Lower leg skin (tissue), 4 donors: ENCODE measurements at regions of chr20 and their contacts with region 1.

Region 1: GRCh38 chr20:38645980-38646858 is 44.6 kb downstream of the ARHGAP40 start:
- DNase-seq: peak; percentile 40 to 94
- H3K4me3 ChIP-seq: no peak overlapping the region
- CTCF ChIP-seq: no peak
- POLR2A ChIP-seq: no peak

Region 2: GRCh38 chr20:38748097-38748860 is 102.1 kb after region 1 on chr20 and contains the start of gene ACTR5:
- intact Hi-C with region 1: loop called (anchors 5 kb)
- DNase-seq: peak; percentile 88 to 99
- H3K4me3 ChIP-seq: peak within 1 kb of the TSS; percentile 85
- CTCF ChIP-seq: no peak
- POLR2A ChIP-seq: no peak
- total RNA-seq, gene ACTR5: 7.3 to 11.7 (median 10.8) TPM

Region 3: DNA sequence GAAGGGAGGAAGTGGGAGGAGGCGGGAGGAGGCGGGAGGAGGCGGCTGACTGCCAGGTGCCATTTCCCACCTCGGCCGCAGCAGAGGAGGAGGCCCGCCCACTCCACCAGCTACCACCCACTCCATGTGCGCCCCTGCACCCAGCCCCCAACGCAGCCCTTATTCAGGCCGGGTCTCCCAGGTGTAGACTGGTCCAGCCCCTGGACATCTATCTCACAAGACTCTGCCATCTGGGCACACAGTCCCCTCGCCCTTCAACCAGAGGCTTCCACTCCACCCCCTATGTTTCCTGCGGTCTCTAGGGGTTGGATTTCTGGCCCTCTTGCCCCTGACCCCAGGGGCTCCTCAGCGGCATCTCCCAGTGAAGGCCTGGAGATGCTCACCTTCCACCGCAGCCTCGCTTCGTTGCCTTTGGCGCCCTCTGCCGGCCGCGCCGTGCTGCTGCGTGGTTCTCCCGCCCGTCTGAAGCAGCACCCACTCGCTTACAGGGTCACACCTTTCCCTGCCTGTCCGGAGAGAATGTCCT is 247.4 kb after region 1 on chr20:
- intact Hi-C with region 1: loop called (anchors 10 kb)
- DNase-seq: peak in 1 of 2 donors; percentile 93
- H3K4me3 ChIP-seq: no peak overlapping the region
- CTCF ChIP-seq: no peak
- POLR2A ChIP-seq: no peak